ENCODE measurements at regions of chr7 and their contacts with region 1.

Region 1: GRCh38 chr7:43729214-43729923 is at the start of gene COA1:
- DNase-seq: peak; percentile 92
- ATAC-seq: peak; percentile 95
- H3K4me3 ChIP-seq: peak within 1 kb of the TSS; percentile 73 to 88 (median 84)
- H3K4me3 Mint-ChIP-seq: peak within 1 kb of the TSS; percentile 93
- H3K27ac ChIP-seq: peak within 1 kb of the TSS; percentile 40 to 71
- H3K27ac Mint-ChIP-seq: peak within 1 kb of the TSS; percentile 87
- H3K4me1 ChIP-seq: peaks cover 12 to 13% of the 10 kb centered on the region in 2 donors
- H3K4me1 Mint-ChIP-seq: peaks cover 36% of the 10 kb centered on the region
- H3K27me3 ChIP-seq: no peaks in the 10 kb centered on the region
- H3K27me3 Mint-ChIP-seq: no peaks in the 10 kb centered on the region
- CTCF ChIP-seq: peak; percentile 22
- total RNA-seq, gene COA1: 72.7 and 89.7 TPM in 2 replicates

Region 2: DNA sequence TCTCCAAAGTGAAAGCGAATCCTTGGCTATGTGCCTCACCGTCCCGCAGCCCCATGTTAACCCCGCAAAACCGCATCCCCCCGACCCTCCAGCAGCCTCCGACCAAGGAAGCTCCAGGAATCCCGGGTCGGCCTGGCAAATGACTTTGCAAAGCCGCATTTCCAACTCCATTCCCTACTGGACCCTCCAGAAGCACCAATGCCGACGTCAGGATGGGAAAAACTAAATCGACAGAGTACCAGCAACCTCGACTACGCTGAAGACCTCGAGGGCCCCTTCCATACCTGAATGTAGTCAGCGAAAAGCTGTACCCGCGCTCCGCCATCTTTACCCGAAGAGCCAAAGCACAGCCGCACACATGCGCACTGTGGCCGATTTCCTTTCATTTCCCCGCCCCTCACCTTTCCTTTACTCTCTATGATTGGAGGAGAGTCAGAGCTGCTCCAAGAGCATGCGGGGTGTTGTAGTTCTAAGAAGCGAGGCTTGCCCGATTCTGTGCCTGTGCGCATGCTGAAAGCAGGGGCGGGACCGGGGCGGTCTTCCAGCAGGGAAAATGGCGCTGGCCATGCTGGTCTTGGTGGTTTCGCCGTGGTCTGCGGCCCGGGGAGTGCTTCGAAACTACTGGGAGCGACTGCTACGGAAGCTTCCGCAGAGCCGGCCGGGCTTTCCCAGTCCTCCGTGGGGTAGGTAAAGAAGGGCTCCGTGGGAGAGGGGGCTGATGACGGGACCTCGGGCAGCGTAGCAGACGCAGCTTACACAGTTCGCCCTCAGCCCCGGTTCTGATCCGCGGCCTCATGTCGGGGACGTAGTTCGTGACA is 797.3 kb before region 1 on chr7 and contains the starts of genes MRPL32 and PSMA2:
- CTCF ChIA-PET with region 1: interaction called, 4 read pairs
- POLR2A ChIA-PET with region 1: no interaction called
- intact Hi-C with region 1: loop called (anchors 2 kb)
- DNase-seq: peak; percentile 97
- ATAC-seq: peak; percentile 100
- H3K4me3 ChIP-seq: peak within 1 kb of the TSS; percentile 79 to 98 (median 90)
- H3K4me3 Mint-ChIP-seq: peak within 1 kb of the TSS; percentile 91
- H3K27ac ChIP-seq: peak within 1 kb of the TSS; percentile 77 to 88
- H3K27ac Mint-ChIP-seq: peak within 1 kb of the TSS; percentile 94
- H3K4me1 ChIP-seq: peaks cover 36 to 38% of the 10 kb centered on the region in 2 donors
- H3K4me1 Mint-ChIP-seq: peaks cover 67% of the 10 kb centered on the region
- H3K27me3 ChIP-seq: no peaks in the 10 kb centered on the region
- H3K27me3 Mint-ChIP-seq: no peaks in the 10 kb centered on the region
- CTCF ChIP-seq: no peak
- total RNA-seq, gene MRPL32: 31.7 and 34.2 TPM in 2 replicates
- total RNA-seq, gene PSMA2: 40.6 and 47.8 TPM in 2 replicates

Region 3: DNA sequence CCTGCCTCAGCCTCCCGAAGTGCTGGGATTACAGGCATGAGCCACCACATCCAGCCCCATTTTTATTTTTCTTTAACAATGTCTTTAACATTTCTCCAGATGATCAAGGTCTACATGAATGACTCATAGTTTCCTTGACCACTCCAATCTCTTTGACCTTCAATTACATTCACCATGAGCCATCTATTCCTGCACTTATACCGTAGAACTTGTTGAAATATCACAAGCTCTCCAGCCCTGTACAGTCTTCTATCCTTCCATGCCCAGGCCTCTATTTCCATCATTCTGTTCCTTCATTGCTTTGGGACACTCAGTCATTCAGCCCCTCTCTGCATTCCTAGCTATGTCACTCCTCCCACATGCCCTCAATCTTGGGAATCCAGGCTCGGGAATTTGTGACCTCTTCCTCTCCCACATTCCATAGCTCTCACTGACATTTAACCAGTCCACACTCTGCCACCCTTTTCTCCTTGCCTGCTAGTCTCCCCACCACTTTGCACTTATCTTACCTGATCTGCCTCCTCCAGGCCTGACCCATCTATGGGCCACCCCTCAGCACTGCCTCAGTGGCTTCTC is 298.3 kb before region 1 on chr7:
- CTCF ChIA-PET with region 1: no interaction called
- POLR2A ChIA-PET with region 1: no interaction called
- intact Hi-C with region 1: loop called (anchors 10 kb)
- DNase-seq: no peak
- ATAC-seq: no peak
- H3K4me3 ChIP-seq: no peak overlapping the region
- H3K4me3 Mint-ChIP-seq: no peak overlapping the region
- H3K27ac ChIP-seq: no peak overlapping the region
- H3K27ac Mint-ChIP-seq: no peak overlapping the region
- H3K4me1 ChIP-seq: no peaks in the 10 kb centered on the region
- H3K4me1 Mint-ChIP-seq: no peaks in the 10 kb centered on the region
- H3K27me3 ChIP-seq: no peaks in the 10 kb centered on the region
- H3K27me3 Mint-ChIP-seq: peaks cover 23% of the 10 kb centered on the region
- CTCF ChIP-seq: no peak

Region 4: DNA sequence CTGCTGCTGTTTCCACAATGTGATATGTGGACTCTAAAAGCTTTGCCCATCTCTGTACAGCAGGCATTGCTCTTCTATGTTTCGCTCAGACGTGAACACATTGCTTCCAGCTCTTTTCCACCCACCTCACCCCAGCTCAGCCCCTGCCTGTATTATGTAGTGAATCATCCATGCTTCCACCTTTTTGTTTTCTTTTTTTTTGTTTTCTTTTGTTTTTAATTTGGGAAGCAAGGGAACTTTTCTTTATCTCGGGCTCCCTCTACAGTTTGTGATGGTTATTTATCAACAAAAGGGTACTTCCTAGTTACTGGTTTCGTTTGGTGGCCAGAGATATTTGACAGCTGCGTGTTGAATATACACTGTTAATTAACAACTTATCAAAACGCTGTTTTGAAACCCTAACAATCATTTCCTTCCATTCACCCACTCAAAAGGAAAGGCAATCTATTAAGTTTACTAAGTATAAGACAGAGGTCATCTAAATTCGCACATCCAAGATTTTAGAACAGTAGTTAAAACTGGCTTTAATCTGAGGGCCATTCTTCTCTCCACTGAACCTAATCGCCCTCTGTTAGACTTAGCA is 274.3 kb before region 1 on chr7:
- CTCF ChIA-PET with region 1: no interaction called
- POLR2A ChIA-PET with region 1: no interaction called
- intact Hi-C with region 1: loop called (anchors 10 kb)
- DNase-seq: peak; percentile 43
- ATAC-seq: no peak
- H3K4me3 ChIP-seq: no peak overlapping the region
- H3K4me3 Mint-ChIP-seq: no peak overlapping the region
- H3K27ac ChIP-seq: no peak overlapping the region
- H3K27ac Mint-ChIP-seq: no peak overlapping the region
- H3K4me1 ChIP-seq: no peaks in the 10 kb centered on the region
- H3K4me1 Mint-ChIP-seq: peaks cover 5% of the 10 kb centered on the region
- H3K27me3 ChIP-seq: no peaks in the 10 kb centered on the region
- H3K27me3 Mint-ChIP-seq: peaks cover 11% of the 10 kb centered on the region
- CTCF ChIP-seq: peak; percentile 66

Region 5: GRCh38 chr7:43758029-43758821 is 28.9 kb after region 1 on chr7 and contains the start of gene BLVRA:
- CTCF ChIA-PET with region 1: interaction called, 3 read pairs
- POLR2A ChIA-PET with region 1: no interaction called
- intact Hi-C with region 1: loop called (anchors 2 kb)
- DNase-seq: peak; percentile 64
- ATAC-seq: peak; percentile 85
- H3K4me3 ChIP-seq: peak within 1 kb of the TSS; percentile 51 to 89 (median 69)
- H3K4me3 Mint-ChIP-seq: peak within 1 kb of the TSS; percentile 91
- H3K27ac ChIP-seq: peak within 1 kb of the TSS in 1 of 2 donors; percentile 52
- H3K27ac Mint-ChIP-seq: peak within 1 kb of the TSS; percentile 67
- H3K4me1 ChIP-seq: peaks cover 9 to 10% of the 10 kb centered on the region in 2 donors
- H3K4me1 Mint-ChIP-seq: peaks cover 23% of the 10 kb centered on the region
- H3K27me3 ChIP-seq: peaks cover 0 to 7% (median 3%) of the 10 kb centered on the region in 4 experiments
- H3K27me3 Mint-ChIP-seq: peaks cover 8% of the 10 kb centered on the region
- CTCF ChIP-seq: no peak
- total RNA-seq, gene BLVRA: 6.9 and 7.2 TPM in 2 replicates